Activated B cell treated with CpG ODN at 0.5 μM for 24 hours (primary cell): ENCODE measurements at regions of chr6 and their contacts with region 1.

Region 1: GRCh38 chr6:169751242-169752073 is at the starts of genes DYNLT2 and ERMARD:
- DNase-seq: peak; percentile 98
- ATAC-seq: peak; percentile 93
- H3K4me3 Mint-ChIP-seq: peak within 1 kb of the TSS; percentile 95
- H3K27ac Mint-ChIP-seq: peak within 1 kb of the TSS; percentile 97
- H3K4me1 Mint-ChIP-seq: peaks cover 30% of the 10 kb centered on the region
- H3K27me3 Mint-ChIP-seq: no peaks in the 10 kb centered on the region
- CTCF ChIP-seq: no peak
- total RNA-seq, gene DYNLT2: 3.7 and 4.4 TPM in 2 replicates
- total RNA-seq, gene ERMARD: 33.5 and 45.4 TPM in 2 replicates

Region 2: DNA sequence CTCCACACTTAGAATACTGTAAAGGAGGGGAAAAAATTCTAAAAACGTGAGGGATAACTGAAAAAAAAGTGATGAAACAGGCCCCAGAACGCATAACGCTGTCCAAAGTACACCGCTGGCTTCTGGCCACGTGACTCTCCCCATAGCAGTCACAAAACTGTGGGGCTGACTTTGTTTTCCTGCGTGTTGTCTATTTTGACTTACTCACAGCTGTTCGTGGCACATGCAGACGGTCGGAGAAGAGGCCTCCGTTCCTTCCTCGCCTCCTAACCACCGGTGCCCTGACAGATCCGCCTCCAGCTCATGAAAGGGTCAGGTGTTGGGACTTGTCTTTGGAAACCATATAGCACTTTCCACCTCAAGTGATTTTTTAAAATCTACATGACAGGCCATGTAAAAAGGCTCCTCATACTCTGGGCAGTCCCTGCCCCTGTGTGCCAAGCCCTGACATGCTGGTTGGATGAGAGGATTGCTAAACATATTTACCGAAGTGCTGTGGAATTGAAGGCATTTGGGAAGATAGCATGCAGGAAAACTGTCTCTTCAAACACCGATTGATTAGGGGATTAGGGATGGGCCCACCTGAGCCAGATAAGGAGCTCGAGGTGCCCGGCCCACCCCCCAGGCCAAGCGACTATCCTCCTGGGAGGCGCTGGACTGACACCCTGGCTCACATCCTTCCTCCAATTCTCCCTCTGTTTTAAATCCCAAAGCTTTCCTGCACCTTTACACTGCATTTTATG is 1486.7 kb before region 1 on chr6:
- CTCF ChIA-PET with region 1: no interaction called
- POLR2A ChIA-PET with region 1: no interaction called
- intact Hi-C with region 1: no loop called
- DNase-seq: no peak
- ATAC-seq: no peak
- H3K4me3 Mint-ChIP-seq: no peak overlapping the region
- H3K27ac Mint-ChIP-seq: no peak overlapping the region
- H3K4me1 Mint-ChIP-seq: no peaks in the 10 kb centered on the region
- H3K27me3 Mint-ChIP-seq: no peaks in the 10 kb centered on the region
- CTCF ChIP-seq: no peak

Region 3: DNA sequence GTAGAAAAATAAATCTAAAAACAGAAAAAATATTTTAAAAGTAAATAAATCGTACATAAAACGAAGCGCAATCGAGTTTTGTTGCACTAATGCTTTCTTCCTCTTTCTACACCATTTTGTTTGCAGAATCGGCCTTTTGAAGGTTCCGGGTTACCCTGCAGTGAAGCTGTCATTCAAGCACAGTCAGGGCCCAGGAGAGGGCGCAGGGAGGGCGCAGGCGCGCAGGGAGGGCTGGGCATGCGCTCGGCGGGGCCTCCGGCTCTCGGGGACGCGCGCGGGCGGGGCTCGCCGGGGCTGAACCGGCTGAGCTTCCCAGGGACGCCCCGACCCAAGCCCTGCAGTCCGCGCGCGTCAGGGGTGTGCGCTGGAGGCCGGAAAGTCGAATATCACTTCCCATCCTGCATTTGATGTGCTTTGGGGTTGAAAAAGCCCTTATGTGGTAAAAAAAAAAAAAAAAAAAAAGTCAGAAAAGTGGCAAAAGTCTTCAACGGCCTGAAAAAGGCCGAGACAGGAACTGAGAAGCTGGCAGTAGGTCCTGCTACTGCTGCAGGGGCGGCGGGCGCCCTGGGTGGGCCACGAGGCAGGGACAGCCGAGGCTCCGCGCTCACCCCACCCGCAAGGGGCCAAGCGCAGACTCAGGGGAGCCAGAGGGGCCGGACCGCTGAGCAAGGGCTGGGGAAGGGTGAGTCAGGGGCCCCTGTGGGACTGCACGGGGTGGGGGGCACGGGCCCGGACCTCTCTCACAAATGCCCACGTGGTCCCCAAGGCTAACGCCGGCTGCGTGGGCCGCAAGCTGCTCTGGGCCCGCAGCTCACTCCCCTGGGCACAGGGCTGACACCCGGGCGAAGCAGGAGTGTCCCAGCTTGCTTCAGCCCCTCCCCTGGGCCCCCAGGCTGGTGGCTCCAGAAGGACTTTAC is 538.3 kb before region 1 on chr6:
- CTCF ChIA-PET with region 1: no interaction called
- POLR2A ChIA-PET with region 1: interaction called, 13 read pairs
- intact Hi-C with region 1: loop called (anchors 5 kb)
- DNase-seq: peak; percentile 82
- ATAC-seq: peak; percentile 98
- H3K4me3 Mint-ChIP-seq: peak overlapping the region; percentile 69
- H3K27ac Mint-ChIP-seq: peak overlapping the region; percentile 68
- H3K4me1 Mint-ChIP-seq: peaks cover 2% of the 10 kb centered on the region
- H3K27me3 Mint-ChIP-seq: no peaks in the 10 kb centered on the region
- CTCF ChIP-seq: no peak

Region 4: DNA sequence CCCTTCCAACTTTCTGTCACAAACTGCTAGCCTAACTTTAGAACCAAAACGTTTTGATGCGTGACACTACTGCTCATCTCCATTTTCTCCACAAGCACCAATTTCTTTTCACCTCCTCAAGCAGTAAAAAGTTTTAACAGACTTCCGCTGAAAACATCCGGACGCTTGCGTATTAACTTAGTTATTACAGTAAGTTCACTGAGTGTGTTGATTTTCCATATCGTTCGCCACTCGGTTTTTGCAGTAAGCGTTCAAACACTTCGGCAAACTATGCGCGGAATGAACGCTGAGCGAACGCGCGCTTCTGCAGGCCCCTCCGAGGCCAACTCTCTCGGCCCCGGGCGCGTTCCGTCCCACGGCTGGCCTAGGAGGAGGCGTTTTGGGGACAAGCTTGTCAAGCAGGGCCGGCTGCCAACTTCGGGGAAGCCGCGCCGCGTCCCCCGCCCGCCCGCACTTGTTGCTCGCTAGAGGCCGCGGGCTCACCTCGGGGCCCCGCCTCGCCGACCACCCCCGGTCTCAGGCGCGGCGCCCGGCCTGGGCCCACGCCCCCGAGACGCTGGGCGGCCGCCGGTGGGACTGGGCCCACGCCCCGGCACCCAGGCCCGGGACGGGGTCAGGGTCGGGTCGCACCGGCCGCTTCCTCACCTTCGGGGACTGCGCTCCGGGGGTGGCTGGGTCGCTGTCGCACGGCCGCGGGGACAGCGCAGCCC is 28.1 kb before region 1 on chr6:
- CTCF ChIA-PET with region 1: no interaction called
- POLR2A ChIA-PET with region 1: interaction called, 55 read pairs
- intact Hi-C with region 1: loop called (anchors 1 kb)
- DNase-seq: peak; percentile 76
- ATAC-seq: peak; percentile 45
- H3K4me3 Mint-ChIP-seq: peak overlapping the region; percentile 82
- H3K27ac Mint-ChIP-seq: peak overlapping the region; percentile 89
- H3K4me1 Mint-ChIP-seq: peaks cover 30% of the 10 kb centered on the region
- H3K27me3 Mint-ChIP-seq: no peaks in the 10 kb centered on the region
- CTCF ChIP-seq: no peak

Region 5: GRCh38 chr6:170584181-170584953 is 832.9 kb after region 1 on chr6 and contains the start of gene PDCD2:
- CTCF ChIA-PET with region 1: no interaction called
- POLR2A ChIA-PET with region 1: interaction called, 8 read pairs
- intact Hi-C with region 1: loop called (anchors 1 kb)
- DNase-seq: peak; percentile 86
- ATAC-seq: peak; percentile 95
- H3K4me3 Mint-ChIP-seq: peak within 1 kb of the TSS; percentile 98
- H3K27ac Mint-ChIP-seq: peak within 1 kb of the TSS; percentile 94
- H3K4me1 Mint-ChIP-seq: peaks cover 20% of the 10 kb centered on the region
- H3K27me3 Mint-ChIP-seq: no peaks in the 10 kb centered on the region
- CTCF ChIP-seq: no peak
- total RNA-seq, gene PDCD2: 88.4 and 90.8 TPM in 2 replicates